Naive thymus-derived CD4-positive, alpha-beta T cell (primary cell): ENCODE measurements at regions of chr3 and their contacts with region 1.

Region 1: DNA sequence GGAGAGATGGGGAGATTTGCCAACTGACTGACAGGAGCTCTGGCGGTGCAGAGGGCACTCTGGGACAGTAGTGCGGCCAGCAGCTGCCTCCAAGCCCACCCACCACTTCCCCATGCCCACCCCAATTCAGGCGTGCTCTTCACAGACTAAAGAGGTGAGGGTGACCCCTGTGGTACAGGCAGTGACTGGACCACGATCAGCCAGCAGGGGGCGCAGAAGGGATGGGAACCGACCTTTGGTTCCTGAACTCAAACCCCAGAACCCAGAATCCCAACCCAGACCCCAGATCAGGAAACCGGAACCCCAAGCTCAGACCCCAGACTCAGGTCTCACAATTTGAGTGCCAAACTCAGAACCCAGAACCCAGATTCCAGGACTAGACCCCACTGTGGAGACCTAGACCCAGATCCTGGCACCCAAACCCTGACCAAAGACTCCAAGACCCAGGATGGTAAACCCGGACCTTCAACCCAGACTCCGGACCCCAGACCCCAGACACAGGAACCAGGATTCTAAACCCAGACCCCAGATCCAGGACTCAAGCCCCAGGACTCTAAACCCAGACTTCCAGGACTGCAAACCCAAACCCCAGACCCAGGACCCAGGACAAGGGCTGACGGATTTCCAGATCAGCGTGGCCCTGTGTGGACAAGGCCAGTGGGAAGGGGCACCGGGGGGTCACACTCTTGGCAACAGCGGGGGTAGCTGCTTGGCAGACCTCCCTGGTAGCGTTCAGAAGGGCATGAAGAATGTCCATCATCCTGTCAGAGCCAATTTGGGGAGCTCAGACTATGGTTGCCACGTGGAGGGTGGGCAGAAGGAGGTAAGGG is 3.7 kb upstream of the MYL3 start:
- DNase-seq: peak; percentile 38 to 80 (median 66)
- ATAC-seq: peak; percentile 69
- H3K4me3 ChIP-seq: no peak overlapping the region
- H3K4me3 Mint-ChIP-seq: no peak overlapping the region
- H3K27ac ChIP-seq: no peak overlapping the region
- H3K27ac Mint-ChIP-seq: peak overlapping the region in 1 of 9 donors; percentile 21
- H3K4me1 ChIP-seq: no peaks in the 10 kb centered on the region
- H3K4me1 Mint-ChIP-seq: no peaks in the 10 kb centered on the region
- H3K27me3 ChIP-seq: no peaks in the 10 kb centered on the region
- H3K27me3 Mint-ChIP-seq: peaks cover 0 to 8% (median 0%) of the 10 kb centered on the region in 5 donors

Region 2: DNA sequence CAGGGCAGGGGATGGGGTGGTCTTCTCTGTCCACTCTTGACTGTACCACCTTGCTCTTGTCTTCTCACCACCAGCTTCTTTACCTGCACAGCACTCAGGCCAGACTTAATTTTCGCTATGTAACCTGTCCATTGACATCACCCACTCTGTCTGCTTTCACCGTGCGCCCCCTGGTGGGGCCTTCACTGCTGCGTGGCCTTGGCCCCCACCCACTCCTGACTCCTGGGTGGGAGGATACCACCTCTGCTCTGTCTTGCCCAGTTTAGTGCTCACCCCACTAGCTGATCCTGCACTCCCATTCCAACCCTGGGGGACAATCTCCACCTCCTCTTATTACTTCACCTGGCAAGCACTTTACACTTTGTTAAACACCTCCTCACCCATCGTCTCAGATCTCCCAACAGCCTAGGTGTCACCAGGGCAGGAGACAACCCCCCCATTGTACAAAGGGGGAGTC is 28.3 kb after region 1 on chr3:
- CTCF ChIA-PET with region 1: interaction called, 6 read pairs
- POLR2A ChIA-PET with region 1: no interaction called
- intact Hi-C with region 1: loop called (anchors 1 kb)
- DNase-seq: peak; percentile 60 to 83 (median 74)
- ATAC-seq: peak; percentile 84
- H3K4me3 ChIP-seq: no peak overlapping the region
- H3K4me3 Mint-ChIP-seq: peak overlapping the region in 1 of 10 donors; percentile 22
- H3K27ac ChIP-seq: no peak overlapping the region
- H3K27ac Mint-ChIP-seq: peak overlapping the region in 1 of 9 donors; percentile 69
- H3K4me1 ChIP-seq: no peaks in the 10 kb centered on the region
- H3K4me1 Mint-ChIP-seq: peaks cover 0 to 10% (median 6%) of the 10 kb centered on the region in 7 donors
- H3K27me3 ChIP-seq: peaks cover 0 to 5% of the 10 kb centered on the region in 2 donors
- H3K27me3 Mint-ChIP-seq: peaks cover 39 to 72% (median 57%) of the 10 kb centered on the region in 5 donors